HepG2 (cell line): ENCODE measurements at regions of chr16 and their contacts with region 1.

Region 1: GRCh38 chr16:87487361-87488001 is 5.3 kb downstream of the ZCCHC14 start:
- DNase-seq: peak; percentile 97
- ATAC-seq: peak; percentile 87
- H3K4me3 ChIP-seq: peak overlapping the region; percentile 38 to 54 (median 50); a peak in 5 of 6 replicates
- H3K27ac ChIP-seq: peak overlapping the region; percentile 60
- H3K4me1 ChIP-seq: peaks cover 71% of the 10 kb centered on the region
- H3K27me3 ChIP-seq: no peaks in the 10 kb centered on the region
- CTCF ChIP-seq: peak; percentile 51
- EP300 ChIP-seq: peak in 1 of 2 experiments; percentile 18; a peak in 1 of 4 replicates
- POLR2A ChIP-seq: peak in 1 of 2 experiments; percentile 38; a peak in 1 of 4 replicates
- RAD21 ChIP-seq: 0 out of 2 replicates have a peak, but pooled peaks have one; percentile 8

Region 2: GRCh38 chr16:87474566-87474996 is 12.9 kb before region 1 on chr16:
- CTCF ChIA-PET with region 1: no interaction called
- POLR2A ChIA-PET with region 1: interaction called, 10 read pairs
- in situ Hi-C with region 1: no loop called
- intact Hi-C with region 1: no loop called
- DNase-seq: peak; percentile 60
- ATAC-seq: peak; percentile 90
- H3K4me3 ChIP-seq: no peak overlapping the region
- H3K27ac ChIP-seq: peak overlapping the region; percentile 48
- H3K4me1 ChIP-seq: peaks cover 73% of the 10 kb centered on the region
- H3K27me3 ChIP-seq: no peaks in the 10 kb centered on the region
- CTCF ChIP-seq: no peak
- EP300 ChIP-seq: no peak
- POLR2A ChIP-seq: no peak
- RAD21 ChIP-seq: no peak

Region 3: GRCh38 chr16:87535855-87536794 is 48.6 kb after region 1 on chr16:
- CTCF ChIA-PET with region 1: no interaction called
- POLR2A ChIA-PET with region 1: interaction called, 11 read pairs
- in situ Hi-C with region 1: loop called (anchors 5 kb)
- intact Hi-C with region 1: no loop called
- DNase-seq: peak; percentile 87
- ATAC-seq: peak; percentile 86
- H3K4me3 ChIP-seq: peak overlapping the region; percentile 40 to 63 (median 50)
- H3K27ac ChIP-seq: peak overlapping the region; percentile 78
- H3K4me1 ChIP-seq: peaks cover 75% of the 10 kb centered on the region
- H3K27me3 ChIP-seq: peaks cover 7 to 18% of the 10 kb centered on the region in 2 experiments
- CTCF ChIP-seq: 0 out of 2 replicates have a peak, but pooled peaks have one; percentile 16
- EP300 ChIP-seq: peak in 1 of 2 experiments; percentile 28; a peak in 1 of 4 replicates
- POLR2A ChIP-seq: peak in 1 of 2 experiments; percentile 23; a peak in 1 of 4 replicates
- RAD21 ChIP-seq: peak; percentile 15; the same call in 1 of the 2 replicates

Region 4: GRCh38 chr16:87571136-87571867 is 83.8 kb after region 1 on chr16:
- CTCF ChIA-PET with region 1: no interaction called
- POLR2A ChIA-PET with region 1: no interaction called
- in situ Hi-C with region 1: no loop called
- intact Hi-C with region 1: loop called (anchors 1 kb)
- DNase-seq: peak; percentile 59
- ATAC-seq: peak; percentile 89
- H3K4me3 ChIP-seq: peak overlapping the region in 1 of 3 experiments; percentile 29; a peak in 1 of 6 replicates
- H3K27ac ChIP-seq: no peak overlapping the region
- H3K4me1 ChIP-seq: peaks cover 25% of the 10 kb centered on the region
- H3K27me3 ChIP-seq: peaks cover 3 to 45% of the 10 kb centered on the region in 2 experiments; a peak in 3 of 5 replicates
- CTCF ChIP-seq: peak; percentile 66
- EP300 ChIP-seq: no peak
- POLR2A ChIP-seq: no peak
- RAD21 ChIP-seq: peak; percentile 62